Activated CD8-positive, alpha-beta T cell treated with anti-CD3 and anti-CD28 coated beads, Interleukin-2, amount 10 ng/mL, durations not matched to agents 7 days and 5 days (primary cell): ENCODE measurements at regions of chr20 and their contacts with region 1.

Region 1: GRCh38 chr20:49541733-49542513 is 26.0 kb downstream of the PTGIS start:
- DNase-seq: peak; percentile 86
- ATAC-seq: peak; percentile 75
- H3K4me3 Mint-ChIP-seq: no peak overlapping the region
- H3K27ac Mint-ChIP-seq: peak overlapping the region; percentile 91
- H3K4me1 Mint-ChIP-seq: peaks cover 26% of the 10 kb centered on the region
- H3K27me3 Mint-ChIP-seq: no peaks in the 10 kb centered on the region

Region 2: GRCh38 chr20:49335476-49335875 is 206.4 kb before region 1 on chr20:
- CTCF ChIA-PET with region 1: interaction called, 18 read pairs
- POLR2A ChIA-PET with region 1: no interaction called
- DNase-seq: no peak
- ATAC-seq: no peak
- H3K4me3 Mint-ChIP-seq: no peak overlapping the region
- H3K27ac Mint-ChIP-seq: no peak overlapping the region
- H3K4me1 Mint-ChIP-seq: no peaks in the 10 kb centered on the region
- H3K27me3 Mint-ChIP-seq: peaks cover 14% of the 10 kb centered on the region

Region 3: DNA sequence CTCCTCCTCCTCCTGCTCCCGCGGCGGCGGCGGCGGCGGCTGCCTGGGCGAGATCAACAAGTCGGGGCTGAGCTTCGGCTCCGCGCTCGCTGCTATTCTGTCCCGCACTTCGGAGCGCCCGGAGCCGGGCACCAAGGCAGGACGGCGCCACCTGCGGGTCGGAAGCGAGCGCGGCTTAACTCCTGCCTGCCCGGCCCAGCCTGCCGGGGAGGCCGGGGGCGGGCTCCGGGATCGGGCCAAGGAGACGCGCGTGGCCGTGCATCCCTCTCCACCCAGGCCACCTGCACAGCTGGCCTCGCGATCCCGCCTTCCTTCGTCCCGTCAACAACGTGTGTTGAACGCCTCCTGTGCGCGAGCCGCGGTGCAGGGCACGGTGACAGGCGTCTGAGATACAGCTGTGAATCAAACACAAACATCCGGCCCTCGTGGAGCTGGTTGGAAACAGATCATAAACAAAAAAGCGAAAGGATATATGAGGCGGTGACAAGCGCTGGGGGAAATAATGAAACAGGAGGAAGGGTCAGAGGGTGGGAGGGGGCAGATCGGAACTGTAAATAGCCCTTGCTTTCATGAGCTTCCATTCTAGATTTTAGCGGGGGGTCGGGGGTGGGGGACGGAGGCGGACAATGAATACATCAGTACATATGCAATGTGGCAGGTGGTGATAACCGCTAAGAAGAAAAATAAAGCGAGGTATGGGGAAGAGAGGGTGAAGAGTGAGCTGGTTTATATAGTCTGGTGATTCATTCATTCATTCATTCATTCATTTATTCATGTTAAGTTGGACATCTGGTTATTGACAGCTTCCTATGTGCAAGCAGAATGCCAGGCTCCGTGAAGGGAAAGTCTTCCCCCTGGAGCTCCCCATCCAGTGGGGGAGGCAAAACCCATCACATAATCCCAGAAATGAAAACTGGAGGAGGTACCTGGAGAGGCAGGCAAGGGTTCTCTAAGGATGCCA is 57.5 kb before region 1 on chr20:
- CTCF ChIA-PET with region 1: no interaction called
- POLR2A ChIA-PET with region 1: no interaction called
- DNase-seq: peak; percentile 73
- ATAC-seq: peak; percentile 92
- H3K4me3 Mint-ChIP-seq: peak overlapping the region; percentile 68
- H3K27ac Mint-ChIP-seq: peak overlapping the region; percentile 11
- H3K4me1 Mint-ChIP-seq: peaks cover 3% of the 10 kb centered on the region
- H3K27me3 Mint-ChIP-seq: peaks cover 49% of the 10 kb centered on the region

Region 4: GRCh38 chr20:49556621-49557020 is 14.7 kb after region 1 on chr20:
- CTCF ChIA-PET with region 1: interaction called, 51 read pairs
- POLR2A ChIA-PET with region 1: interaction called, 4 read pairs
- DNase-seq: no peak
- ATAC-seq: no peak
- H3K4me3 Mint-ChIP-seq: no peak overlapping the region
- H3K27ac Mint-ChIP-seq: no peak overlapping the region
- H3K4me1 Mint-ChIP-seq: peaks cover 7% of the 10 kb centered on the region
- H3K27me3 Mint-ChIP-seq: peaks cover 36% of the 10 kb centered on the region

Region 5: DNA sequence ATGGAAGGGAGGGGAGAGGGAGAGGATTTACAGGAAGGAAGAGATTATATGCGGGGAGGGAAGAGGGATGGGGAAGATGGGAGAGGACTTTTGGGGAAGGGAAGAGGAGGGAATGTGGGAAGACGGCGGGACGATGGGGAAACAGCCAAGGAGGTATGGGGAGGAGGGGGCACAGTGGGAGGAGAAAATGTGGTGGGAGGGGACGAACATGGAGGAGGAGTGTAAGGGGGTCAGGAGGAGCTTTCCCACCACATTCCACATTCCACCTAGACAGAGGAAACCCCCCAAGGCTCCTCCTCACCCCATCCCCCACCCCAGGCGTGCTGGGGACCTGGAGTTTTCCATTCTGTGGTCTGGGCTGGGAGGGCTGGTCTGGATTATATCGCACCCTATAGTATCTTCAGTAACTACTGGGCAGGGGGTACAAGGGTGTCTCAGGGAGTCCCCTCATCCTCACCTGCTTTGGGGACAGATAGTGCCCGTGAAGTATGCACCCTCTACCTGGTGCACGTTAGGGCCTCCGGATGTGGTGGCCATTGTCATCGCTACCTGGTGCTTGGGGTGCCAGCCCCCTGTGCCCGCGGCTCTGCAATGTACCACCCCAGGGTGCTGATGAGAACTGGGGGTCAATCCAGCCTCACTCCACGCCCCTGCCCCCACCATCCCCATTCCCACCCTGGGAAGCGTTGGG is 26.7 kb after region 1 on chr20:
- CTCF ChIA-PET with region 1: interaction called, 18 read pairs
- POLR2A ChIA-PET with region 1: no interaction called
- DNase-seq: no peak
- ATAC-seq: peak; percentile 6
- H3K4me3 Mint-ChIP-seq: peak overlapping the region; percentile 28
- H3K27ac Mint-ChIP-seq: peak overlapping the region; percentile 25
- H3K4me1 Mint-ChIP-seq: peaks cover 37% of the 10 kb centered on the region
- H3K27me3 Mint-ChIP-seq: peaks cover 39% of the 10 kb centered on the region

Region 6: GRCh38 chr20:49583669-49584417 is 41.9 kb after region 1 on chr20:
- CTCF ChIA-PET with region 1: interaction called, 14 read pairs
- POLR2A ChIA-PET with region 1: no interaction called
- DNase-seq: no peak
- ATAC-seq: no peak
- H3K4me3 Mint-ChIP-seq: no peak overlapping the region
- H3K27ac Mint-ChIP-seq: no peak overlapping the region
- H3K4me1 Mint-ChIP-seq: peaks cover 40% of the 10 kb centered on the region
- H3K27me3 Mint-ChIP-seq: peaks cover 2% of the 10 kb centered on the region

Region 7: DNA sequence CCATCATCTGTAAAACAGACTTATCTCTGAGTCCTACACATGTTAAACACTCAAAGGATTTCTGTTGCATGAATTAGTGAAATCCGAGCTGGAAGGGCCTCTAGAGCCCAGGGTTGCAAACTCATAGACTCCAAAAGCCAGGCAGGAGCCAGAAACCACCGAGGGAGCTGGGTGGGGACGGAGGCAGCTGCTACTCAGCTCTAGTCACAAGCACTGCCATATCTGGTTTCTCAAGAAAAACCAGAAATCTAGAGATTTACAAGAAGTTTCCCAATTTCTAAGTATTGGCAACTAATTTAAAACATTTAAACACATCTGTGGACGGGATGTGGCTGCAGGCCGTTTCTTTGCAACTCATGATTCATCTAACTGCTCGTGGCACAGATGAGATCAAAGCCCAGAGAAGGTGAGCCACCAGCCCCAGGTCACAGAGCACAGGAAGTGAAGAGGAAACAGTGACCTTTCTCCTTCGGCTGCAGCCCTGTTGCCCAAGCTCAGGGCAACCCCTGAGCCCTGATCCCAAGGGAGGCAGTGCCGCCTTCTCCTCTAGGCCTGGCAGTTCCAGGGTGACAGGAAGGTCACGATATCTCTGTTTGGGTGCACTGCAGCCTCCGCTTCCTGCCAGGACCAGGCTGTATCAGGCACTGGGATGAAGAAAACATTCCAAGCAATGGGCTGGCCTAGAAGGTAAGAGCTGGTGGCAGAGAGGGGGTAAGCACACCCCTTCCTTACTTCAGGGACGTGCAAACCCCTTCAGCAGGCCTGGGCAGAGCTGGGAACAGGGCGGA is 52.4 kb after region 1 on chr20:
- CTCF ChIA-PET with region 1: interaction called, 79 read pairs
- POLR2A ChIA-PET with region 1: interaction called, 27 read pairs
- DNase-seq: peak; percentile 93
- ATAC-seq: peak; percentile 74
- H3K4me3 Mint-ChIP-seq: peak overlapping the region; percentile 81
- H3K27ac Mint-ChIP-seq: peak overlapping the region; percentile 96
- H3K4me1 Mint-ChIP-seq: peaks cover 87% of the 10 kb centered on the region
- H3K27me3 Mint-ChIP-seq: no peaks in the 10 kb centered on the region

Region 8: GRCh38 chr20:49704932-49705336 is 163.0 kb after region 1 on chr20:
- CTCF ChIA-PET with region 1: no interaction called
- POLR2A ChIA-PET with region 1: no interaction called
- DNase-seq: no peak
- ATAC-seq: no peak
- H3K4me3 Mint-ChIP-seq: no peak overlapping the region
- H3K27ac Mint-ChIP-seq: no peak overlapping the region
- H3K4me1 Mint-ChIP-seq: peaks cover 40% of the 10 kb centered on the region
- H3K27me3 Mint-ChIP-seq: no peaks in the 10 kb centered on the region